Activated CD4-positive, alpha-beta memory T cell treated with anti-CD3 and anti-CD28 coated beads for 36 hours (primary cell): ENCODE measurements at regions of chr2 and their contacts with region 1.

Region 1: DNA sequence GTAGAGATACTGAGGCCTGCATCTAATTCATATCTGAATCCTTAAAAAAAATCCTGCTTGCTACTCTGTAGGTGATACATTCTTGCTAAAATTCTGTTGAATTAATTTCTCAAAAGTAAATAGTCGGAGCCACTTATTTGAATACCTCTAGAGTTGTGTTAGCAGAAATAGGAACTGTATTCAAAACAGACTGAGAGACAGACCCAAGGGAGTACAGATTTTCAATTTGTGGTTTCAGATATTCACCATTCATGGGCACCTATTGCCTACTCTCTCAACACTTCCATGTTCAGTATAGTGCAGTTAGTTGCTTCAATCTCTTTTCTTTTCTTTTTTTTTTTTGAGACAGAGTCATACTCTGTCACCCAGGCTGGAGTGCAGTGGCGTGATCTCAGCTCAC is 46.6 kb upstream of the CTLA4 start:
- DNase-seq: no peak
- H3K4me3 Mint-ChIP-seq: no peak overlapping the region
- H3K27ac Mint-ChIP-seq: no peak overlapping the region
- H3K4me1 Mint-ChIP-seq: peaks cover 36% of the 10 kb centered on the region
- H3K27me3 Mint-ChIP-seq: no peaks in the 10 kb centered on the region

Region 2: GRCh38 chr2:203804070-203804469 is 16.9 kb before region 1 on chr2:
- CTCF ChIA-PET with region 1: interaction called, 39 read pairs
- POLR2A ChIA-PET with region 1: no interaction called
- intact Hi-C with region 1: loop called (anchors 1 kb)
- DNase-seq: peak; percentile 63
- H3K4me3 Mint-ChIP-seq: no peak overlapping the region
- H3K27ac Mint-ChIP-seq: peak overlapping the region; percentile 11
- H3K4me1 Mint-ChIP-seq: peaks cover 83% of the 10 kb centered on the region
- H3K27me3 Mint-ChIP-seq: no peaks in the 10 kb centered on the region